Activated CD4-positive, alpha-beta T cell treated with anti-CD3 and anti-CD28 coated beads for 36 hours (primary cell): ENCODE measurements at regions of chr3 and their contacts with region 1.

Region 1: GRCh38 chr3:183591881-183592521 is 36.5 kb upstream of the KLHL6 start:
- DNase-seq: no peak
- ATAC-seq: peak; percentile 48
- H3K4me3 Mint-ChIP-seq: no peak overlapping the region
- H3K27ac Mint-ChIP-seq: peak overlapping the region; percentile 75
- H3K4me1 Mint-ChIP-seq: peaks cover 42% of the 10 kb centered on the region
- H3K27me3 Mint-ChIP-seq: no peaks in the 10 kb centered on the region

Region 2: GRCh38 chr3:183298701-183299153 is 293.3 kb before region 1 on chr3:
- CTCF ChIA-PET with region 1: no interaction called
- POLR2A ChIA-PET with region 1: no interaction called
- intact Hi-C with region 1: no loop called
- DNase-seq: no peak
- ATAC-seq: no peak
- H3K4me3 Mint-ChIP-seq: no peak overlapping the region
- H3K27ac Mint-ChIP-seq: no peak overlapping the region
- H3K4me1 Mint-ChIP-seq: peaks cover 7% of the 10 kb centered on the region
- H3K27me3 Mint-ChIP-seq: no peaks in the 10 kb centered on the region

Region 3: GRCh38 chr3:183435661-183436060 is 156.3 kb before region 1 on chr3:
- CTCF ChIA-PET with region 1: no interaction called
- POLR2A ChIA-PET with region 1: no interaction called
- intact Hi-C with region 1: no loop called
- DNase-seq: peak; percentile 51
- ATAC-seq: peak; percentile 88
- H3K4me3 Mint-ChIP-seq: no peak overlapping the region
- H3K27ac Mint-ChIP-seq: no peak overlapping the region
- H3K4me1 Mint-ChIP-seq: peaks cover 40% of the 10 kb centered on the region
- H3K27me3 Mint-ChIP-seq: peaks cover 2% of the 10 kb centered on the region

Region 4: DNA sequence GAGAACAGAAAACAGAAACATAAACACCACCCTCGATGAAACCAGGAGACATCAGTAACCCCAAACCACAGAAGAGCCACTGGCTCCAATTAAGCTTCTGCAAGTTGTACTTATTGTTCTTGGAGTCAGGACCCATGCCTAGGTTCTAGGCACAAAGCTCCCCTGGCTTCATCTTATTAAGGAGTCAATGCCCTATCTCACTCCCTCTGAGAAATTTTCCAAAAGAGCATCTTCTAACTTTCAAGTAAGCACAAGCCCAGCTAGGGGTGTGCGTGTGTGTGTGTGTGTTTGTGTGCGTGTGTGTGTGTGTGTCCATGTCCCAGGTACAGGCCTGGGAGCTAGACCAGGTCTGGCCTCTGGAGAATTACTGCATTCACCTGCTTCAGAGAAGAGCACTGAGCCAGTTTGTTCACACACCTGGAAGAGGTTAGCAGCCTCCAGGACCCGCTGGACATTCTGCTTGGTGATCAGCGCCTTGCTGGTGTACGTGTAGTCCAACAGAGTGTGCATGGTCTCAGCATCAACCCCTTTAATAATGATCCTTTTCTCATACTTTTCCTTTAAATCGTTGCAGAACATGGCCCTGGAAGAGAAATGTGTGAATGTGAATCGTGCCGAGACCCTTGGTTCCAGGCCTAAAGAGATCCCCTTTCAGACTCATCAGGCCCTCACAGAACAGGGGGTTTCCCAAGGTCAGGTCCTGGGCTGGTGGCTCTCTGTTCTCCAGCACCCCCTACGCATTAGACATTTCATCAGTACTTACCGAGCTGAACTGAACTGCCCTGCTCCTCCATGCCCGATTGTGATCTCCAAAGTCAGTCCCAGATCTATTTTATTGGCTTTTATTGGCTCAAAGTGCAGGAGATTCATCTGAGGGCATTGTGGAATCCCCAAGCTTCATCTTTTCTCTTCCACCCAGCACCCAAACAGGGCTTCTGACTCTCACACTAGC is 64.3 kb before region 1 on chr3:
- CTCF ChIA-PET with region 1: no interaction called
- POLR2A ChIA-PET with region 1: no interaction called
- intact Hi-C with region 1: no loop called
- DNase-seq: peak; percentile 36
- ATAC-seq: peak; percentile 82
- H3K4me3 Mint-ChIP-seq: peak overlapping the region; percentile 39
- H3K27ac Mint-ChIP-seq: peak overlapping the region; percentile 87
- H3K4me1 Mint-ChIP-seq: peaks cover 63% of the 10 kb centered on the region
- H3K27me3 Mint-ChIP-seq: no peaks in the 10 kb centered on the region

Region 5: GRCh38 chr3:183566880-183567279 is 25.1 kb before region 1 on chr3:
- CTCF ChIA-PET with region 1: no interaction called
- POLR2A ChIA-PET with region 1: no interaction called
- intact Hi-C with region 1: no loop called
- DNase-seq: no peak
- ATAC-seq: no peak
- H3K4me3 Mint-ChIP-seq: no peak overlapping the region
- H3K27ac Mint-ChIP-seq: no peak overlapping the region
- H3K4me1 Mint-ChIP-seq: peaks cover 9% of the 10 kb centered on the region
- H3K27me3 Mint-ChIP-seq: no peaks in the 10 kb centered on the region

Region 6: GRCh38 chr3:183579967-183580900 is 11.8 kb before region 1 on chr3:
- CTCF ChIA-PET with region 1: interaction called, 10 read pairs
- POLR2A ChIA-PET with region 1: no interaction called
- intact Hi-C with region 1: no loop called
- DNase-seq: no peak
- ATAC-seq: no peak
- H3K4me3 Mint-ChIP-seq: no peak overlapping the region
- H3K27ac Mint-ChIP-seq: no peak overlapping the region
- H3K4me1 Mint-ChIP-seq: peaks cover 26% of the 10 kb centered on the region
- H3K27me3 Mint-ChIP-seq: no peaks in the 10 kb centered on the region